CD4-positive, alpha-beta memory T cell (primary cell): ENCODE measurements at regions of chr9 and their contacts with region 1.

Region 1: DNA sequence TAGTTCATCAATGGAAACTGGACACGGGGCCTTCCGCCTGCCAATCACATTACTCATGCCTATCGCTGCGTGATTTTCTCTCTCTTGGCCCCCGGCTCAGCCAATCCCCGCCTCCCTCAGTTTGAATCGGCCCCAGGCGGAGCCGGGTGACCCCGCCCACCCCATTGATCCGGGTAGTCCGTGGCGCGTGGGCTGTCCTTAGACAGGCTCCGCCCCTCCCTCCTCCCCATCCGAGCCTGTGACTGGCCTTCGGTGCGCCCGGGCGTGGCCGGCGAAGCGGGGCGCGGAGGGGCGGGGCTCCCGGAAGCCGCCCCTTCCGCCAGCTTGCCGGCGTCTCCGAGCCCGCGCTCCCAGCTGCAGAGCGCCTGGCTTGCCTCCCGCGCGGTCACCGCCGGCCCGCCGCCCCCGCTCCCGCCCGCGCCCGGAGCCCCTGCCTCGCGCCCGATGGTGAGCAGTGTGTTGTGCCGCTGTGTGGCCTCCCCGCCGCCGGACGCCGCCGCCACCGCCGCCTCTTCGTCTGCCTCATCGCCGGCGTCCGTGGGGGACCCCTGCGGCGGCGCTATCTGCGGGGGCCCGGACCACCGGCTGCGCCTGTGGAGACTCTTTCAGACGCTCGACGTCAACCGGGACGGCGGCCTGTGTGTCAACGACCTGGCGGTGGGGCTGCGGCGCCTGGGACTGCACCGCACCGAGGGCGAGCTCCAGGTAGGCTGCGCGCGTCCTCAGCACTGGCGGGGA is at the start of gene SLC25A25:
- DNase-seq: peak; percentile 100
- H3K4me3 ChIP-seq: peak within 1 kb of the TSS; percentile 87 to 92
- H3K4me3 Mint-ChIP-seq: peak within 1 kb of the TSS in 7 of 8 donors; percentile 89 to 98 (median 94)
- H3K27ac ChIP-seq: peak within 1 kb of the TSS; percentile 86
- H3K27ac Mint-ChIP-seq: peak within 1 kb of the TSS; percentile 83 to 97 (median 91)
- H3K4me1 ChIP-seq: peaks cover 80% of the 10 kb centered on the region
- H3K4me1 Mint-ChIP-seq: peaks cover 36 to 56% (median 45%) of the 10 kb centered on the region in 4 donors
- H3K27me3 ChIP-seq: no peaks in the 10 kb centered on the region
- H3K27me3 Mint-ChIP-seq: no peaks in the 10 kb centered on the region
- total RNA-seq, gene SLC25A25: 22.0 to 26.9 TPM

Region 2: GRCh38 chr9:127589955-127590370 is 478.1 kb before region 1 on chr9:
- CTCF ChIA-PET with region 1: no interaction called
- POLR2A ChIA-PET with region 1: no interaction called
- intact Hi-C with region 1: no loop called
- DNase-seq: peak in 2 of 5 donors; percentile 25 to 33
- H3K4me3 ChIP-seq: no peak overlapping the region
- H3K4me3 Mint-ChIP-seq: no peak overlapping the region
- H3K27ac ChIP-seq: no peak overlapping the region
- H3K27ac Mint-ChIP-seq: no peak overlapping the region
- H3K4me1 ChIP-seq: no peaks in the 10 kb centered on the region
- H3K4me1 Mint-ChIP-seq: peaks cover 0 to 3% (median 2%) of the 10 kb centered on the region in 4 donors
- H3K27me3 ChIP-seq: no peaks in the 10 kb centered on the region
- H3K27me3 Mint-ChIP-seq: peaks cover 3 to 5% of the 10 kb centered on the region in 2 donors

Region 3: GRCh38 chr9:127970401-127971313 is 97.4 kb before region 1 on chr9:
- CTCF ChIA-PET with region 1: no interaction called
- POLR2A ChIA-PET with region 1: interaction called, 16 read pairs
- intact Hi-C with region 1: no loop called
- DNase-seq: peak; percentile 72 to 89 (median 73)
- H3K4me3 ChIP-seq: peak overlapping the region; percentile 61 to 76
- H3K4me3 Mint-ChIP-seq: peak overlapping the region; percentile 78 to 98 (median 93)
- H3K27ac ChIP-seq: peak overlapping the region; percentile 78
- H3K27ac Mint-ChIP-seq: peak overlapping the region; percentile 81 to 99 (median 97)
- H3K4me1 ChIP-seq: peaks cover 100% of the 10 kb centered on the region
- H3K4me1 Mint-ChIP-seq: peaks cover 73 to 100% (median 87%) of the 10 kb centered on the region in 4 donors
- H3K27me3 ChIP-seq: no peaks in the 10 kb centered on the region
- H3K27me3 Mint-ChIP-seq: no peaks in the 10 kb centered on the region

Region 4: GRCh38 chr9:128015696-128016095 is 52.3 kb before region 1 on chr9:
- CTCF ChIA-PET with region 1: no interaction called
- POLR2A ChIA-PET with region 1: no interaction called
- intact Hi-C with region 1: no loop called
- DNase-seq: no peak
- H3K4me3 ChIP-seq: no peak overlapping the region
- H3K4me3 Mint-ChIP-seq: no peak overlapping the region
- H3K27ac ChIP-seq: no peak overlapping the region
- H3K27ac Mint-ChIP-seq: no peak overlapping the region
- H3K4me1 ChIP-seq: peaks cover 14% of the 10 kb centered on the region
- H3K4me1 Mint-ChIP-seq: peaks cover 14 to 35% (median 16%) of the 10 kb centered on the region in 4 donors
- H3K27me3 ChIP-seq: no peaks in the 10 kb centered on the region
- H3K27me3 Mint-ChIP-seq: no peaks in the 10 kb centered on the region

Region 5: DNA sequence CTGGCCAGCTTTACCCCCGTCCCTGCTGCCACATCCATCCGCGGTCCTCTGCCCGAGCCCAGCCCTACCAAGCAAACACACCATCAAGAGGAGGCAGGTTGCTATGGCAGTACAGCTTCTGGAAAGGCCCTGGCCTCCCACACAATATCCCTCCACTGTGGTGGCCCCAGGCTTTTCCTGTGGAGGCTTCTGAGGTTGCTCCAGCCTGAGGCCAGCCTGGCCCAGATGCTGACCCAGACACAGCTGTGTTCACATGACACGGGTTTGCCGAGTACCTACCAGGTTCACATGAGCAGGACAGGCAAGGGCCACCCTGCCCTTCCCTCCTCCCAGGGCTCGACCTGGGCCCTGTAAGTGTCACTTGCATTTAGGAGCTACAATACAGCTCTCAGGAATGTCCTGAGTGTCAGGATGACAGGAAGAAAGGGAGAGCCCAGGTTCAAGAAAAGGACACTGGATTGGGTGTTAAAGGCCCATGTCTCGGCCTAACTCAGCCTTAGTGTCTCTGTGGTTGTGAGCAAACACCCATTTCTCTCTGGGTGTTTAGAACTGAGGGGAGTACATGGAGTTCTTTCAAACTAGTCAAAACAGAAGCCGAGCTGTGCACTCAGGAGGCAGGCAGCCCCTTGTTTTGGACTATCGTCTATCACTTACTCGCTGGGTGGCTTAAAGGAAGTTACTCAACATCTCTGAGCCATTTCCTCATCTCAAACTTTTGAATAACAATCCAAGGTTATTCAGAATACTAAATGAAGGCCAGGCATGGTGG is 41.1 kb before region 1 on chr9:
- CTCF ChIA-PET with region 1: no interaction called
- POLR2A ChIA-PET with region 1: interaction called, 31 read pairs
- intact Hi-C with region 1: loop called (anchors 2 kb)
- DNase-seq: peak in 4 of 5 donors; percentile 50 to 75 (median 54)
- H3K4me3 ChIP-seq: peak overlapping the region; percentile 0 to 25
- H3K4me3 Mint-ChIP-seq: peak overlapping the region; percentile 74 to 89 (median 82)
- H3K27ac ChIP-seq: peak overlapping the region; percentile 80
- H3K27ac Mint-ChIP-seq: peak overlapping the region; percentile 98 to 100 (median 99)
- H3K4me1 ChIP-seq: peaks cover 100% of the 10 kb centered on the region
- H3K4me1 Mint-ChIP-seq: peaks cover 54 to 94% (median 78%) of the 10 kb centered on the region in 4 donors
- H3K27me3 ChIP-seq: no peaks in the 10 kb centered on the region
- H3K27me3 Mint-ChIP-seq: no peaks in the 10 kb centered on the region

Region 6: GRCh38 chr9:128094166-128094967 is 26.3 kb after region 1 on chr9:
- CTCF ChIA-PET with region 1: interaction called, 4 read pairs
- POLR2A ChIA-PET with region 1: interaction called, 18 read pairs
- intact Hi-C with region 1: no loop called
- DNase-seq: peak; percentile 57 to 85 (median 69)
- H3K4me3 ChIP-seq: no peak overlapping the region
- H3K4me3 Mint-ChIP-seq: peak overlapping the region in 6 of 8 donors; percentile 15 to 84 (median 64)
- H3K27ac ChIP-seq: peak overlapping the region; percentile 57
- H3K27ac Mint-ChIP-seq: peak overlapping the region; percentile 93 to 98 (median 94)
- H3K4me1 ChIP-seq: peaks cover 85% of the 10 kb centered on the region
- H3K4me1 Mint-ChIP-seq: peaks cover 33 to 87% (median 67%) of the 10 kb centered on the region in 4 donors
- H3K27me3 ChIP-seq: no peaks in the 10 kb centered on the region
- H3K27me3 Mint-ChIP-seq: no peaks in the 10 kb centered on the region

Region 7: DNA sequence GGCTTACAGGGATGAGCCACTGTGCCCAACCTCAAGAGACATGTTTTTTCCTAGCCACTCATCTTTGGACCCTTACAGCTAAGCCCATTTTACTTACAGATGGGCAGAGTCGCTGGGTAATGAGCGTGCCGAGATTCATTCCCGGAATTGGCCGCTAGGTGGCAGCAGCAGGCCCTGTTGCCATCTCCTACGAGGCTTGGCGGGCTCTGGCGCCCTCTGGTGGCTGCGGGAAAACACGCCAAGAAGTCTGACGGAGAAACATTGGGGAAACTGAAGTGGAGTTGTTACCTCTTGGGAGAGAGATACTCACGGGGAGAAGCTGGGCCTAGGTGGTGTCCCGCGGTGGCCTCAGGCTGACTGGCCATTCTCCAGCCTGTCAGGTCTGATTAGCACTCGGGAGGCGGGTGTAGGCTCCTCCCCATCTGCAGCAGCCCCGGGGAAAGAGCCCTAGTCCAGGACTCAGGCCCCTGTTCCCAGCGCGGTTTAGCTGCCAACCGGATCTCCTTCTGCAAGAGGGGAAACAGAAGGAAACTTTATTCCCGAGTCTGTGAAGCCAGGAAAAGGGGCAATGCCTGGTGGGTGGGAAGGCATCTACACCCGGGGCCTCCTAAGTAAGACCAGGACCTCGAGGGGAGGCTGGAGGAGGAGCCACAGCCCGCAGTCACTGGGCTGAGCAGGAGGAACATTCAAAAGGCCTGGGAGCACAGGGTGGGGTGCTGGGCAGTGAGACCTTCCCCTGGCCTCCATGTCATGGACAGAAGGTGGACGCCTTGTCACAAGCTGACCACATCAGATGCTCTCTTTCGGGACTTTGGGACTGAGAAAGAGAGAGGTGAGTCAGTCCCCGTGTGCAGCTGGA is 49.8 kb after region 1 on chr9:
- CTCF ChIA-PET with region 1: interaction called, 15 read pairs
- POLR2A ChIA-PET with region 1: interaction called, 4 read pairs
- intact Hi-C with region 1: no loop called
- DNase-seq: peak; percentile 88 to 93 (median 91)
- H3K4me3 ChIP-seq: no peak overlapping the region
- H3K4me3 Mint-ChIP-seq: peak overlapping the region in 2 of 8 donors; percentile 48 to 50
- H3K27ac ChIP-seq: no peak overlapping the region
- H3K27ac Mint-ChIP-seq: peak overlapping the region in 6 of 7 donors; percentile 9 to 91 (median 61)
- H3K4me1 ChIP-seq: peaks cover 6% of the 10 kb centered on the region
- H3K4me1 Mint-ChIP-seq: peaks cover 3 to 7% (median 5%) of the 10 kb centered on the region in 4 donors
- H3K27me3 ChIP-seq: no peaks in the 10 kb centered on the region
- H3K27me3 Mint-ChIP-seq: no peaks in the 10 kb centered on the region

Region 8: DNA sequence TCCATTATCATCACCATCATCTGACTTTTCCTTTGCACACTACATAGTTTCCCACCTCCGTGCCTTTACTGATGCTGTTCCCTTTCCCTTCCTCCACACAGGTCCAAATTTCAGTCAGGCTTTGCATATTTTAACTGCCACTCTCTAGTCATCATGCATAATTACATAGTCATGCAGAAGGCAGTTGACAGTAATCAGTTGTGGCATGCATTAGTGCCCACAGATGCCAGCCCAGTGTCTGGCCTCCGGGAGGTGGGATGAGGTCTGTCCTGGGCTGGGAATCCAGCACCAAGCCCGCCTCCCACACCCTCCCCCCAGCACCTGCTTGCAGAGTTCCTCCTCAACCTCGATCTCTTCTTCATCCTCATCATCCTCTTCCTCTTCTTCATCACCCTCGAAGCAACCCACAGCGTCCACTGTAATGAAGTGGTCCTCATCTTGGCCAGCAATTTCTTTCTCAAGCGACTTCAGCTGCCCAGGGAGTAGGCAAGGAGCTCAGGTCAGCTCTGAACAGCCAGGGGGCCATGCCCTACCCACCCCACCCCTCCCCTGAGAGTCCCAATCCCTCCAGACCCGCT is 100.8 kb after region 1 on chr9:
- CTCF ChIA-PET with region 1: no interaction called
- POLR2A ChIA-PET with region 1: no interaction called
- intact Hi-C with region 1: no loop called
- DNase-seq: no peak
- H3K4me3 ChIP-seq: no peak overlapping the region
- H3K4me3 Mint-ChIP-seq: no peak overlapping the region
- H3K27ac ChIP-seq: no peak overlapping the region
- H3K27ac Mint-ChIP-seq: peak overlapping the region in 4 of 7 donors; percentile 8 to 43 (median 28)
- H3K4me1 ChIP-seq: no peaks in the 10 kb centered on the region
- H3K4me1 Mint-ChIP-seq: peaks cover 0 to 2% (median 0%) of the 10 kb centered on the region in 4 donors
- H3K27me3 ChIP-seq: no peaks in the 10 kb centered on the region
- H3K27me3 Mint-ChIP-seq: no peaks in the 10 kb centered on the region

Region 9: GRCh38 chr9:128191406-128192046 is 123.5 kb after region 1 on chr9 and contains the start of gene CIZ1:
- CTCF ChIA-PET with region 1: no interaction called
- POLR2A ChIA-PET with region 1: no interaction called
- intact Hi-C with region 1: no loop called
- DNase-seq: peak; percentile 61 to 77 (median 70)
- H3K4me3 ChIP-seq: peak within 1 kb of the TSS; percentile 81 to 82
- H3K4me3 Mint-ChIP-seq: peak within 1 kb of the TSS; percentile 88 to 98 (median 94)
- H3K27ac ChIP-seq: peak within 1 kb of the TSS; percentile 80
- H3K27ac Mint-ChIP-seq: peak within 1 kb of the TSS; percentile 76 to 97 (median 90)
- H3K4me1 ChIP-seq: peaks cover 22% of the 10 kb centered on the region
- H3K4me1 Mint-ChIP-seq: peaks cover 14 to 35% (median 27%) of the 10 kb centered on the region in 4 donors
- H3K27me3 ChIP-seq: no peaks in the 10 kb centered on the region
- H3K27me3 Mint-ChIP-seq: no peaks in the 10 kb centered on the region
- total RNA-seq, gene CIZ1: 156 to 165 TPM

Region 10: DNA sequence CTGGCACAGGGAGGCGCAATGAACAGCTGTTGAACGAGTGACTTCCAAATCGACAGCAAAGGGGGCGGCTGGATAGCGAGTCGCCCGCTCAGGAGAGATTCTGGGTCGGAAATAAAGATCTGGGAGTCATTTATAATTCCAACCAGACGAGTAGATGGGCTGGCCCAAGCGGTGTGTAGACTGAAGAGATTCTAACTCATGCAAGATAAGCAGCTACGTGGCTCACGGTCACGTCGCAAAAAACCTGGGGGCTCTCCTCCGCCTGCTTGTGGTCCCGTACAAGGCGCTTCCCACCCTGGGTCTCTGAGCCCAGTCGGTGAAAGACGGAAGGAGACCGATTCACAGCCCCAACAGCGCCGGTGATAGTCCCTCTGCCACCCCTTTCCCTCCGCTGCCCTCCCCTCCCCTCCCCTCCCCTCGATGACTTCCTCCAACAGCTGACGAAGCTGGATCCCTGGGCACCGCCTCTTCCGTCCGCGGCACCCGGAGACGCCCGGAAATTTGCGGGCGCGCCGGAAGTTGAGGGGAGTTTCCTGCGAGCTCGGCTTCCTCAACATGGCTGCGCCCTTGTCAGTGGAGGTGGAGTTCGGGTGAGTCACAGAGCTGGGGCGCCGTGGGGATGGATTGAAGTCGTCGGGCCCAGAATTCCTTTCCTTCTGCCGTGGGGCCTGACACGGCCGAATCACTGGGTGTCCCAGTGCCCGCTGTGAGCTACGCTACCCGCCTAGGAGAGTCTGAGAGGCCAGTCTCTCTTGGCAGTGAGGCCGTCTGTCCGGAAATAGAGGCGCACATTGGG is 303.0 kb after region 1 on chr9 and contains the start of gene URM1:
- CTCF ChIA-PET with region 1: no interaction called
- POLR2A ChIA-PET with region 1: no interaction called
- intact Hi-C with region 1: loop called (anchors 2 kb)
- DNase-seq: peak; percentile 95 to 98 (median 96)
- H3K4me3 ChIP-seq: peak within 1 kb of the TSS; percentile 88 to 95
- H3K4me3 Mint-ChIP-seq: peak within 1 kb of the TSS; percentile 95 to 98 (median 96)
- H3K27ac ChIP-seq: peak within 1 kb of the TSS; percentile 91
- H3K27ac Mint-ChIP-seq: peak within 1 kb of the TSS; percentile 97 to 99 (median 98)
- H3K4me1 ChIP-seq: peaks cover 20% of the 10 kb centered on the region
- H3K4me1 Mint-ChIP-seq: peaks cover 22 to 37% (median 29%) of the 10 kb centered on the region in 4 donors
- H3K27me3 ChIP-seq: no peaks in the 10 kb centered on the region
- H3K27me3 Mint-ChIP-seq: peaks cover 2 to 4% of the 10 kb centered on the region in 2 donors
- total RNA-seq, gene URM1: 44.1 to 45.5 TPM